OCI-LY7 (cell line): ENCODE measurements at regions of chr5 and their contacts with region 1.

Region 1: GRCh38 chr5:149990518-149991376 is 9.7 kb downstream of the TIGD6 start:
- DNase-seq: peak; percentile 74
- H3K4me3 ChIP-seq: no peak overlapping the region
- H3K27ac ChIP-seq: no peak overlapping the region
- H3K4me1 ChIP-seq: no peaks in the 10 kb centered on the region
- CTCF ChIP-seq: peak; percentile 97

Region 2: GRCh38 chr5:149834246-149834855 is 156.4 kb before region 1 on chr5:
- CTCF ChIA-PET with region 1: interaction called, 5 read pairs
- POLR2A ChIA-PET with region 1: interaction called, 4 read pairs
- intact Hi-C with region 1: loop called (anchors 1 kb)
- DNase-seq: peak; percentile 73
- H3K4me3 ChIP-seq: no peak overlapping the region
- H3K27ac ChIP-seq: no peak overlapping the region
- H3K4me1 ChIP-seq: no peaks in the 10 kb centered on the region
- CTCF ChIP-seq: peak; percentile 84

Region 3: GRCh38 chr5:149852641-149853330 is 138.0 kb before region 1 on chr5:
- CTCF ChIA-PET with region 1: no interaction called
- POLR2A ChIA-PET with region 1: no interaction called
- intact Hi-C with region 1: loop called (anchors 5 kb)
- DNase-seq: peak; percentile 66
- H3K4me3 ChIP-seq: no peak overlapping the region
- H3K27ac ChIP-seq: no peak overlapping the region
- H3K4me1 ChIP-seq: no peaks in the 10 kb centered on the region
- CTCF ChIP-seq: peak; percentile 95

Region 4: GRCh38 chr5:150058480-150059126 is 67.9 kb after region 1 on chr5:
- CTCF ChIA-PET with region 1: no interaction called
- POLR2A ChIA-PET with region 1: no interaction called
- intact Hi-C with region 1: no loop called
- DNase-seq: no peak
- H3K4me3 ChIP-seq: no peak overlapping the region
- H3K27ac ChIP-seq: no peak overlapping the region
- H3K4me1 ChIP-seq: no peaks in the 10 kb centered on the region
- CTCF ChIP-seq: no peak